ENCODE measurements at regions of chrX and their contacts with region 1.

Region 1: GRCh38 chrX:50100188-50100587 is 100.6 kb downstream of the AKAP4 start:
- DNase-seq: peak; percentile 8
- H3K4me3 Mint-ChIP-seq: no peak overlapping the region
- H3K27ac Mint-ChIP-seq: no peak overlapping the region
- H3K4me1 Mint-ChIP-seq: no peaks in the 10 kb centered on the region
- H3K27me3 Mint-ChIP-seq: peaks cover 56% of the 10 kb centered on the region
- CTCF ChIP-seq: peak; percentile 13

Region 2: GRCh38 chrX:50081282-50081889 is 18.8 kb before region 1 on chrX:
- CTCF ChIA-PET with region 1: interaction called, 11 read pairs
- POLR2A ChIA-PET with region 1: no interaction called
- intact Hi-C with region 1: no loop called
- DNase-seq: peak; percentile 23
- H3K4me3 Mint-ChIP-seq: no peak overlapping the region
- H3K27ac Mint-ChIP-seq: no peak overlapping the region
- H3K4me1 Mint-ChIP-seq: no peaks in the 10 kb centered on the region
- H3K27me3 Mint-ChIP-seq: peaks cover 58% of the 10 kb centered on the region
- CTCF ChIP-seq: peak; percentile 8

Region 3: GRCh38 chrX:50180073-50180940 is 80.1 kb after region 1 on chrX:
- CTCF ChIA-PET with region 1: no interaction called
- POLR2A ChIA-PET with region 1: no interaction called
- intact Hi-C with region 1: no loop called
- DNase-seq: no peak
- H3K4me3 Mint-ChIP-seq: no peak overlapping the region
- H3K27ac Mint-ChIP-seq: no peak overlapping the region
- H3K4me1 Mint-ChIP-seq: no peaks in the 10 kb centered on the region
- H3K27me3 Mint-ChIP-seq: peaks cover 40% of the 10 kb centered on the region
- CTCF ChIP-seq: no peak

Region 4: GRCh38 chrX:50204364-50204899 is 104.2 kb after region 1 on chrX and contains the start of gene CCNB3:
- CTCF ChIA-PET with region 1: interaction called, 8 read pairs
- POLR2A ChIA-PET with region 1: no interaction called
- intact Hi-C with region 1: loop called (anchors 1 kb)
- DNase-seq: peak; percentile 69
- H3K4me3 Mint-ChIP-seq: peak within 1 kb of the TSS; percentile 72
- H3K27ac Mint-ChIP-seq: peak within 1 kb of the TSS; percentile 68
- H3K4me1 Mint-ChIP-seq: peaks cover 6% of the 10 kb centered on the region
- H3K27me3 Mint-ChIP-seq: peaks cover 30% of the 10 kb centered on the region
- CTCF ChIP-seq: peak; percentile 60
- total RNA-seq, gene CCNB3: 0.17 and 0.68 TPM in 2 replicates

Region 5: GRCh38 chrX:50579955-50580354 is 479.8 kb after region 1 on chrX:
- CTCF ChIA-PET with region 1: interaction called, 36 read pairs
- POLR2A ChIA-PET with region 1: no interaction called
- intact Hi-C with region 1: loop called (anchors 1 kb)
- DNase-seq: peak; percentile 79
- H3K4me3 Mint-ChIP-seq: no peak overlapping the region
- H3K27ac Mint-ChIP-seq: no peak overlapping the region
- H3K4me1 Mint-ChIP-seq: no peaks in the 10 kb centered on the region
- H3K27me3 Mint-ChIP-seq: peaks cover 68% of the 10 kb centered on the region
- CTCF ChIP-seq: peak; percentile 68